Activated T-helper 1 cell treated with anti-CD3 and anti-CD28 coated beads, Interleukin-12 subunit alpha, Interleukin-12 subunit beta, Interleukin-2, Interleukin-4 antibody, amounts not matched to agents 30 ng/mL and 10 ng/mL and 1 ng/mL, durations not matched to agents 14 hours and 24 hours and 36 hours (primary cell): ENCODE measurements at regions of chr13 and their contacts with region 1.

Region 1: GRCh38 chr13:99087096-99087953 is 109.5 kb upstream of the DOCK9 start:
- DNase-seq: peak; percentile 93
- H3K4me3 Mint-ChIP-seq: peak overlapping the region; percentile 97
- H3K27ac Mint-ChIP-seq: peak overlapping the region; percentile 98
- H3K4me1 Mint-ChIP-seq: peaks cover 39% of the 10 kb centered on the region
- H3K27me3 Mint-ChIP-seq: peaks cover 2% of the 10 kb centered on the region

Region 2: DNA sequence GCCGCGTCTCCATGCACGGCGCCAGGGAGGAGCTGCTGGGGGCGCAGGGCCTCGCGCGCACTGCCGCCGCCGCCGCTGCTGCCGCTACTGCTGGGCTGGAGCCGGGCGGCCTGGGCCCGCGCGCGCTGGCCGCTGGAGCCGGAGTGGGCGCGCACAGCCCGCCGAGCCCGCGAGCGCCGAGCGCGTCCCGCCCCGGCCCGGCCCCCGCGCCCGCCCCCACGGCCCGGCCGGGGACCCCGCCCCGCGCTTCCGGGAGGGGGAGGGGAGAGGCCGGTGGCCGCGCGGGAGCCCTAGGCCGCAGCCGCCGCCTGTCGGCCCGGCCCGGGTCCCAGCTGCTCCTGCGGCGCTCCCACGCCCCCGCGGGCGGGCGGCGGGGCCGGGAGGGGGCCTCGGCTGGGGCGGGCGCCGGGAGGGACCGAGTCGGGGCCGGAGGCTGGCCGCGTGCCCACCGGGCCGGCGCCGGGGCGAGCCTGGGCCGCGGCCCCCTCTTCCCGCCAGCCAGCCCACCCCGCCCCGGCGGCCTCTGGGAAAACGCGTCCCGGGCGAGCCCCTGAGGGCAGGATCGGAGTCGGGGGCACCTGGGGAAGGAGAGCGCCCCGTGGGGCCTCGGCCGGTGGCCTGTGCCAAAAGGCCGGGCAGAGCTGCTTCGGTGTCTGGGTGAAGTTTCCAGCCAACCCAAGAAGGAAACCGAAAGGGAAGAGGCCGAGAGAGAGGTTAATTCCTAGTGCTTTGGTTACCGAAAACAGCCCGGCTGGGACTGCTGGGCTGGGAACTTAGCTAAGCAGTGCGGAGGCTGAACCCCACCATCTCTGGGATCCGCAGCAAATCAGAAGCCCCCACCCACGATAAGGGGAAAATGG is 510.1 kb before region 1 on chr13 and contains the start of gene STK24:
- intact Hi-C with region 1: loop called (anchors 1 kb)
- DNase-seq: peak; percentile 66
- H3K4me3 Mint-ChIP-seq: peak within 1 kb of the TSS; percentile 98
- H3K27ac Mint-ChIP-seq: peak within 1 kb of the TSS; percentile 86
- H3K4me1 Mint-ChIP-seq: peaks cover 45% of the 10 kb centered on the region
- H3K27me3 Mint-ChIP-seq: no peaks in the 10 kb centered on the region
- total RNA-seq, gene STK24: 135 and 139 TPM in 2 replicates

Region 3: GRCh38 chr13:98890186-98890585 is 197.1 kb before region 1 on chr13:
- intact Hi-C with region 1: loop called (anchors 5 kb)
- DNase-seq: no peak
- H3K4me3 Mint-ChIP-seq: no peak overlapping the region
- H3K27ac Mint-ChIP-seq: peak overlapping the region; percentile 53
- H3K4me1 Mint-ChIP-seq: peaks cover 39% of the 10 kb centered on the region
- H3K27me3 Mint-ChIP-seq: no peaks in the 10 kb centered on the region

Region 4: DNA sequence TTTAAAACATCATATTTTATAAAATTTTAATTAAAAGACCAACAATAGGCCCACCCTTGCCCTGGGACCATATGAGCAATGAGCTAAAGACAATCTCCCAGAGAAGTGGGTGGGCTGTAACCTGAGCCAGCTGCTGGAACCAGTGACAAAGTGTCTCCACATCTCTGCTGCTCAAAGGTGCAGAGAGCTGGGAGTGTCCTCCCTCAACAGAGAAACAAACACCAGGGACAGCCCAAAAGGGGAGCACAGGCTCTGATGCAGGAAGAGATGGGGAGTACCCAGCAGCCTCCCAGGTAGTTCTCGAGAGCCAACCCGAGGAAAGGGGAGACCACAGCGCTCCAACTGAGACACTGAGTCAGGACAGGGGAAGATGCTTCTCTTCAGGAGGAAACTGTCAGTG is 148.5 kb before region 1 on chr13:
- intact Hi-C with region 1: no loop called
- DNase-seq: no peak
- H3K4me3 Mint-ChIP-seq: no peak overlapping the region
- H3K27ac Mint-ChIP-seq: no peak overlapping the region
- H3K4me1 Mint-ChIP-seq: no peaks in the 10 kb centered on the region
- H3K27me3 Mint-ChIP-seq: peaks cover 2% of the 10 kb centered on the region

Region 5: DNA sequence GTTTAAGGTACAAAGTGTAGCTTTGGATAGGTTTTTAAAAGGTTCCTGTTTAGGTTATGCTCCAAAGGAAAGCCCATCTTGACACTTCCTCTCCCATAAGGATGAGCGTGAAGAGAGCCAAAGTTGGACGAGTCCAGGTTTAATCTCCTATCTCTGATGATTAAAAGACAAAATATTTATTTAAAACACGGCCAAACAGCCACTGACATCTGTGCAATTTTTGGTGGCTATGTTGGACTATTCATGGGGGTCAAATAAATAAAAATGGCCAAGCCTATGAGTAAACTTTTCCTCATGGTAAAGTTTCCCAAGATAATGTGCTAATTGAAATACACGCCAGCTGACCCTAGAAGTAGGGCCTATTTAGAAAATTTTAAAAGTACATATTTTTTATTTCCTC is 40.5 kb before region 1 on chr13:
- intact Hi-C with region 1: loop called (anchors 1 kb)
- DNase-seq: no peak
- H3K4me3 Mint-ChIP-seq: peak overlapping the region; percentile 68
- H3K27ac Mint-ChIP-seq: peak overlapping the region; percentile 91
- H3K4me1 Mint-ChIP-seq: peaks cover 93% of the 10 kb centered on the region
- H3K27me3 Mint-ChIP-seq: no peaks in the 10 kb centered on the region

Region 6: DNA sequence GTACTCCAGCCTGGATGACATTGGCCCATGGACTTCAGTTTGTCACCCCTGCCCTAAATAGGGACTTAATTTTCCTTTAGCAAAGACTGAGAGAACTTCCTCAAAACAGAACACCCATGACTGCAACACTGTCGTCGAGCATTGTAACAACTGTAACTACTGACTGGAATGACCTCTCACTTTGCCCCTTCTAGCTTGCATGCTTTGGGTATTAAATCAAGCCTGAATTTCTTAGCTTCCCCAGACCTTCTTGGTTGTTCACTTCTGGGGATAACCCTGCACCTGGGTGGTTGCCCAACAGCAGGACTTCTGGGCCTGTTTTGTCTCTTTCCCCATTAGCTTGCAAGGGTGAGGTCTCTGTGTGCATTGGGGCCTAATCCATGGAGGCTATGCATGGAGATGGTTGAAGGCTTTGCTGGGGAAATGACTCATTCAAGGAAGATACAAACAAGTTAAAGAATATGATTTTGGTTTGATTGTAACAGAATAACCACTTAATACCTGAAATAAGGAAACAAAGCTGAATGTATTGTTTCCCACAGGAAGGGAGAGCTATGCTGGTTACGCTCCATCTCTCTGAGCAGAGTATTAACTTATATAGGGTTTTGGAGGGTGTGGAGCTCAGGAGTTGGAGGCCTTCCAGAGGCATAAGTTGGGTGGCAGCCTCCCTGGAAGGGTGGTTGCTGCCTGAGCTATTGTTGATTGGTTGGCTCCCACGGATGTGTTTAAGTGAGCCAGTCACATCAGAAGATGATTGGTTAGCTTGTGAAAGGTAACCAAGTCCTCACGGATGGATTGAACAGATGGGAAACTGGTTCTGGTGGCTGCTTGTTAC is 78.6 kb after region 1 on chr13:
- intact Hi-C with region 1: no loop called
- DNase-seq: no peak
- H3K4me3 Mint-ChIP-seq: no peak overlapping the region
- H3K27ac Mint-ChIP-seq: no peak overlapping the region
- H3K4me1 Mint-ChIP-seq: no peaks in the 10 kb centered on the region
- H3K27me3 Mint-ChIP-seq: peaks cover 16% of the 10 kb centered on the region

Region 7: DNA sequence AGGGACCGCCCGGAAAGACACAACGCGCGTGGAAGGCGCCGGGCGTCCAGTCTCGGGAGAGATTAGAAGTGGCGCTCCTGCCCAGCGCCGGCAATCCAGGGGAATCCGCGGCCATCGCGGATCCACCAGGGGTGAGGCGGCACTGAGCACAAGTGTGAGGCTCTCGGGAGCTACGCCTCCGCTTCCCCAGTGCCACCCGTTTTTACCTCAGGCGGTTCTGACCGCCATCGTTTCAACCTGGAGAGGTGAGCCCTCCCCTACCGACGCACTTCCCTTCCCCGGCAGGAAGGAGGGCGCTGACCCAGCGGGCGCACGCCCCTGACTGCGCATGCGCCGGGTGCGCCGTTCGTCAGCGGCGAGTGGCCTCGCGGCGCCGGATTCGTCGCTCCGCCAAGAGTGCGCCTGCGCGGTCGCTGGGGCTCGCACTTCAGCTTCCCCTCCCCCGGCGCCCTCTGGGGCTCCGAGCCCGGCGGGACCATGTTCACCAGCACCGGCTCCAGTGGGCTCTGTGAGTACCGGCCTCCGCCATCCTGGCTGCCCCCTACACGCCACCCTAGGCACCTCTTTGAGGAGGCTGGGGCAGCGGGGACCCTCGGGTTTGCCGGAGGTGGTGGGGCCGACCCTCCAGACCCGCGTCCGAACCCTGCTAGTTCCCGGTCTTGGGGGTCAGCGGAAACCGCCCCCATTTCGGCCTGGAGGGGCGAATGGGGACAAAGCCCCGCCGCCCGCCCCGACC is 113.3 kb after region 1 on chr13 and contains the start of gene UBAC2:
- intact Hi-C with region 1: loop called (anchors 2 kb)
- DNase-seq: peak; percentile 97
- H3K4me3 Mint-ChIP-seq: peak within 1 kb of the TSS; percentile 98
- H3K27ac Mint-ChIP-seq: peak within 1 kb of the TSS; percentile 96
- H3K4me1 Mint-ChIP-seq: peaks cover 65% of the 10 kb centered on the region
- H3K27me3 Mint-ChIP-seq: no peaks in the 10 kb centered on the region
- total RNA-seq, gene UBAC2: 52.1 and 56.3 TPM in 2 replicates

Region 8: DNA sequence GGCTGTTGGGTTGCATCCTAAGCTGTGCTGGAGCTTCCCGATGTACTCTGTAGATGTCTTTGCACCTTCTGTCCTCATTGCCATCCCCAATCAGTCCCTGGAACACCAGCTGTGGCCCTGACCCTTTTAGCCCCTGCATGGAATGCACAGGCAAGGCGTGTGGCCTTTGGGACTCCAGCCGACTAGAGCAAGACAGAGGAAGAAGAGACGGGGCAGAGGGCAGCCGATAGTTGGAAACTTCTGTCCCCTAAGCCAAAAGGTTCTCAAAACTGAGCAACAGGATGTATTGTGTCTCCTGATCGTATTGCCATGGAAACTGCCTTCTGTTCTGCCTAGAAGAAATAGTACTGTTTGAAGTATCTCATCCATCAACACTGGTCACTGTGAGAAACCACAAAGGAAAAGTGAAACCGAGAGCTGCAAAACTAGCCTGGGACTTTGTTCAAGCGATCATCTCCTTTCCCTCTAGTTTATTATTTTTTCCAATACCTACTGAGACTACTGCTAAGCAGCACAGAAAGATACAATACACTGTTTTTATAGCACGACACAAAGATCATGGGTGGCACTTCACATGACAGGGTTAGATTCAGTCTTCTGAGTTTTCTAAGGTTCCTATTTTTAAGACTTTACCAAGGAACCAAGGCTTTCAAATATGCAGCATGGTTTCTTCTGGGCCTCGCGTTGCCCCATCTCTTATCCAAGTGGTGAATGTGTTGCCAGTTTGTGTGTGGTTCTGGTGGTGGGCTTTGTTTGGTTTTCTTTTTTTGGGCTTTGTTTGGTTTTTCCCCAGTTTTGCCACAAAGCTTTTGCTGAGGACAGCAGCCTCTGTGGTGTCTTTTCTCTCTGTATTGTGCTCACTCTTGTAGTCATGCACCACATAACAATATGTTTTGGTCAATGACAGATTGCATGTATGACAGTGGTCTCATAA is 269.1 kb after region 1 on chr13:
- intact Hi-C with region 1: loop called (anchors 5 kb)
- DNase-seq: peak; percentile 74
- H3K4me3 Mint-ChIP-seq: peak overlapping the region; percentile 62
- H3K27ac Mint-ChIP-seq: peak overlapping the region; percentile 95
- H3K4me1 Mint-ChIP-seq: peaks cover 99% of the 10 kb centered on the region
- H3K27me3 Mint-ChIP-seq: peaks cover 3% of the 10 kb centered on the region

Region 9: DNA sequence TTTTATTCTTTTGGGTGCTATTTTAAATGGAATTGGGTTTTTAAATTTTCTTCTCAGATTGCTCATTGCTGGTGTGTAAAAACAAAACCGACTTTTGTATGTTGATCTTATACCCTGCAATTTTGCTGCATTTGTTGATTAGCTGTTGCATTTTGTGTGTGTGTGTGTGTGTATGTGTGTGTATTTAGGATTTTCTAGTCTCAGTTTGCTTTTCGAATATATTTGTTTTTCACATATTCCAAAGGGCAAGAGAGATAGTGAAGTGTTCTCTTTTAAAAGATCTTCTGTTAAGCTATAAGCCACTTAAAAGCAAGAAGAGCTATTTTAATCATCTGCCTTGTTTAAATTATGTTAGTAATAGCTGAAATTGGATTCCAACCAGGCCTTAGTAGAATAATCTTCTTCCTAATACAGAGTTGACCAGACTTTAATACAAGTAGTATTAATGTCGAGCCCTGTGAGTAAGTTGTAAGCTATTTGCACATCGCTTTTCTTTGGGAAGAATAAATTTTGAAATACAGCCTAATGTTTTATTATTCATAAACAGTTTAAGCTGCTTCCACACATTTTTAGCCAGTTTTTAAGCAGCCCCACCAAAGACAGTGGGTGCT is 471.4 kb after region 1 on chr13:
- intact Hi-C with region 1: no loop called
- DNase-seq: no peak
- H3K4me3 Mint-ChIP-seq: no peak overlapping the region
- H3K27ac Mint-ChIP-seq: no peak overlapping the region
- H3K4me1 Mint-ChIP-seq: peaks cover 13% of the 10 kb centered on the region
- H3K27me3 Mint-ChIP-seq: no peaks in the 10 kb centered on the region

Region 10: DNA sequence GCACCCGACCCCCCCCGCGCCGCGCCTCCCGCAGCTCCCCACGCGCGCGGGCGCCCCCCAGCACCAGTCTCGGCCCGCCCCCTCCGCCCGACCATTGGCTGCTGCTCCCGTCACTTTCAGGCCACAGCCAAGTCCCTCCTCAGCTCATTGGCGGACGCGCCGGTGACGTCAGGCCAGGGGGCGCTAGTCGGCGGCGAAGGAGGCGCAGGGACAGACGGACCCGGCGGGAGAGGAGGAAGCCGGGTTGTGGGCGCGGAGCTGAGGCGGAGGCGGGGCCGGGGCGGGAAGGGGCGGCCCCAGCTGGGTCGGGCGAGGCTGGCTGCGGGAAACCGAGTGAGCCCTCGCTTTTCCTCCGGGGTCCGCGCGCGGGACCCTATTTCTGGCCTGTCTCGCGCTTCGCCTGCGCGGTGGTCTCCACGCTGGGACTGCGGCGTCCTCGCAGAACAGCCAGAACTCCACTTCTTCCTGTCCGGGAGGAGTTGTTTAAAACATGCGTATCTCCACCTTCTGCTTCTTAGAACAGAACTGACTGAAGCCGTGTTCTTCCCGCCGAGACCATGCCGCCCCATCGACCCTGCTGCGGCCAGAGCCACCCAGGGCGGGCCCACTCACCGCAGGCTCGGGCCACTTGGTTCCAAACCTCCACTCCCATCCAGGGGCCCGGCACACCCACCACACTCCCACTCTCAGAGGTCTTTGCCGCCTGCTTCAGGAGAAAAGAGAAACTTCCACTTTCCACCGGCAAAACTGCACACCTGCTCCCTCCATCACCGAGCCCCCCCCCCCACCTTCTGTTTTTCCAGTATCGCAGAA is 1587.7 kb after region 1 on chr13:
- intact Hi-C with region 1: loop called (anchors 10 kb)
- DNase-seq: peak; percentile 100
- H3K4me3 Mint-ChIP-seq: peak overlapping the region; percentile 87
- H3K27ac Mint-ChIP-seq: peak overlapping the region; percentile 86
- H3K4me1 Mint-ChIP-seq: peaks cover 31% of the 10 kb centered on the region
- H3K27me3 Mint-ChIP-seq: peaks cover 10% of the 10 kb centered on the region